Activated T-helper 1 cell treated with anti-CD3 and anti-CD28 coated beads, Interleukin-12 subunit alpha, Interleukin-12 subunit beta, Interleukin-2, Interleukin-4 antibody, amounts not matched to agents 30 ng/mL and 10 ng/mL and 1 ng/mL, durations not matched to agents 14 hours and 24 hours and 36 hours (primary cell): ENCODE measurements at regions of chr13 and their contacts with region 1.

Region 1: DNA sequence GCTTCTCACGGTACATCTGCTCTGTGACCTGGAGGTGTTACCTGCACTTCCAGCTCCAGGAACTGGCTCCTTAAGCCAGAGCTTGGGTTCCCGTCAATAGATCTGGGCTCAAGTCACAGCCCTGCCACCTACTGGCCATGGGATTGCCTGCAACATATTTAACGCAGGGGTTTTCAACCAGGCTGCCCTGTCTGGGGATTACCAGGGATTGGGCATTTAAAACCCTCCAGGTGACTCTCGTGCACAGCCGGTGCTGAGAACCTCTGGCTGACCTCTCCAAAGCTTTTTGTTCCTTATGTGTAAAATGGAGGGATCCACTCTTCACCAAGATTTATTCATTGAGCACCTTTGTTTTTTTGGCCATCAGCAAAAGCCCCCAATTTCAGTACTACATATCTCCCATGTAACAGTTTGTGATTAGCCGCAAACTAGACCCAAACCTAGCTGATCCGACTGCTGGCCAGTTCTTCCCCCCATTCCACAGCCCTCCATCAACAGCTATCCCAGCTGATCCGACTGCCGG is 76.6 kb upstream of the STK24 start:
- DNase-seq: peak; percentile 52
- H3K4me3 Mint-ChIP-seq: no peak overlapping the region
- H3K27ac Mint-ChIP-seq: no peak overlapping the region
- H3K4me1 Mint-ChIP-seq: peaks cover 4% of the 10 kb centered on the region
- H3K27me3 Mint-ChIP-seq: peaks cover 5% of the 10 kb centered on the region

Region 2: GRCh38 chr13:98150832-98151479 is 502.6 kb before region 1 on chr13:
- intact Hi-C with region 1: loop called (anchors 5 kb)
- DNase-seq: no peak
- H3K4me3 Mint-ChIP-seq: no peak overlapping the region
- H3K27ac Mint-ChIP-seq: no peak overlapping the region
- H3K4me1 Mint-ChIP-seq: no peaks in the 10 kb centered on the region
- H3K27me3 Mint-ChIP-seq: peaks cover 23% of the 10 kb centered on the region

Region 3: DNA sequence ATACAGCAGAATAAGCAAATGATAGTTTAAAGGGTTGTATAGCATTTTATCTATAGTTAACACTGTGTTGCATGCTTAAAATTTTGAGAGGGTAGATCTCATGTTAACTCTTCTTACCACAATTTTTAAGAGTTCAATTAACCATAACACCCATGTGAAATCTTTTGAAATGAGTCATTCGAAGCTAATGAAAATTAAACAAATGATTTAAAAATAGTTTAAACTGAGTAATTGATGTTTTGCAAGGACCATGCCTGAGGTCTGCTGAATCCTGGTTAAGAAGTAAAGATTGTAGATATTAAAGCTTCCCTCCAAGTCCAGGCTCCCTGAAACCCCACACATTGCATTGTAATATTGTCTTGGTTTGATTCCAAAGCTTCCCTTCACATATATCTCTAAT is 299.8 kb before region 1 on chr13:
- intact Hi-C with region 1: no loop called
- DNase-seq: no peak
- H3K4me3 Mint-ChIP-seq: no peak overlapping the region
- H3K27ac Mint-ChIP-seq: no peak overlapping the region
- H3K4me1 Mint-ChIP-seq: no peaks in the 10 kb centered on the region
- H3K27me3 Mint-ChIP-seq: no peaks in the 10 kb centered on the region

Region 4: GRCh38 chr13:98445340-98446233 is 207.9 kb before region 1 on chr13:
- intact Hi-C with region 1: loop called (anchors 1 kb)
- DNase-seq: peak; percentile 62
- H3K4me3 Mint-ChIP-seq: no peak overlapping the region
- H3K27ac Mint-ChIP-seq: peak overlapping the region; percentile 58
- H3K4me1 Mint-ChIP-seq: peaks cover 8% of the 10 kb centered on the region
- H3K27me3 Mint-ChIP-seq: no peaks in the 10 kb centered on the region

Region 5: GRCh38 chr13:99045396-99045795 is 391.9 kb after region 1 on chr13:
- intact Hi-C with region 1: no loop called
- DNase-seq: no peak
- H3K4me3 Mint-ChIP-seq: peak overlapping the region; percentile 68
- H3K27ac Mint-ChIP-seq: peak overlapping the region; percentile 91
- H3K4me1 Mint-ChIP-seq: peaks cover 93% of the 10 kb centered on the region
- H3K27me3 Mint-ChIP-seq: peaks cover 2% of the 10 kb centered on the region